ENCODE measurements at regions of chr22 and their contacts with region 1.

Region 1: DNA sequence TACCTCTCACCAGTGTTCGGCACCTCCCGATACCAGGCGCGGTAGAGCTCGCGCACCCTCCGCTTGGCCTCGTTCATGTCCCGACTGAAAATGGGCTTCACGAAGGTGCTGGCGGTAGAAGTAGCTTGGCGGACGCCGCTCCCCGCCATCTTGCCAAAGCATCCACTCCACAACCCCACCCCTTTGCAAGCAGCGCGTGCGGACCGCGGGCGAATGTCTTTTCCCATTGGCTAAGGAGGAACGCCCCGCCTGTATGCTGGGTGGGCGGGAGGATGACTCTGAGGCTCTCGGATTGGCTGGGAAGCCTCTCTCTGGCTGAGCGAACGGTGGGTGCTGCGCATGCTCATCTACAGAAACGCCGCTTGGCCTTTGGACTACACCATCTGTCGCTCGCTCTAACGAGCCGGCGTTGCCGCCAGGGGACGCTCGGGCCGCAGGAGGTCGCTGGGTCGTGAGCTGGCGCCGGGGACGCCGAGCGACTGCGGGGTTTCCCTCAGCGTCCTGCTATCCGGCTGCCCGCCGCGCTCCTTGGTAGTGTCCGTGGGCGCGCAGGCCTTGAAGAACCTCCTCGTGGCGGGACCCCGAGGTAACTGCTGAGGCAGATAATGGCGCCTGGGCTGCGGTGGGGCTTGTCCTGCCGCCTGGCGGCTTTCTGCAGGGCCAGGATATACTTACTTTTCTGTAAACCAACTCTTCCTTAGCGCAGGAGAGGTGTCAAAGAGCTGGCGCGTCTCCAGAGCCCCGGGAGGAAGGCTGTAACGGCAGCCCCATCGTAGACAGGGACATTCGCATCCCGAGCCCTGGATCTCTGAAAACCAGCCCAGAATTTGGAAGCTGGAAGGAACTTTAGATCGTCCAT is at the start of gene NDUFA6:
- DNase-seq: peak; percentile 97
- H3K4me3 ChIP-seq: peak within 1 kb of the TSS; percentile 93
- H3K27ac ChIP-seq: peak within 1 kb of the TSS; percentile 90
- H3K27me3 ChIP-seq: no peaks in the 10 kb centered on the region
- CTCF ChIP-seq: peak; percentile 86
- polyA plus RNA-seq, gene NDUFA6: 90.4 and 103 TPM in 2 replicates

Region 2: DNA sequence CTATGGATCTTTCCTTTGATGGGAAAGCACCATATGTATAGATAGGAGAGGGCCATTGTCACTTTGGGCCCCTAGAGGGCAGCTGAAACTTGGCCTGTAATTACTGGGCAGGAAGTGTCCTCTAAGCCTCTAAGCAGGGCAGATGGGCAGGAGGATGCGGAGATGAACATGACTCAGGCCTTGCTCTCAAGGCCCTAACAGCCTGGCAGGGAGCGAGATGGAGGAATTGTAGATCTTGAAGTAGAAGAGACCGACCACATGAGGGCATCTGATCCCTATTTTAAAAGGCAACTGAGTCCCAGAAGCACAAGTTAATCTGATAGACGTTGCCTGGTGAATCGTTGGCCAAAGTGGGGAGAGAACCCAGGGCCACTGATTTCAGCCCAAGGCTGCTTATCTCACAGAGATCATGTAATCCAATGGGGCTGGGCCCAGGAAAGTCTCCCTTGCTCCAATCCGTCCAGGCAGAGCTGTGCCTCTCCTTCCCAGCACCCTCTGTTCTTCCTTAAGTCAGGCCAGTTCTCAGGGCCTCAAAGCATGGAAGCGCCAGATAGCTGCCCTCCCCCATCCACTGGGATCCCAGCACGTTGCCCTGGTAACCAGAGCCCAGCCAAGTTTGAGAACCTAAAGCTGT is 124.1 kb before region 1 on chr22:
- CTCF ChIA-PET with region 1: interaction called, 12 read pairs
- POLR2A ChIA-PET with region 1: no interaction called
- DNase-seq: peak; percentile 61
- H3K4me3 ChIP-seq: no peak overlapping the region
- H3K27ac ChIP-seq: no peak overlapping the region
- H3K27me3 ChIP-seq: peaks cover 11% of the 10 kb centered on the region
- CTCF ChIP-seq: peak; percentile 43

Region 3: GRCh38 chr22:42079319-42080251 is 11.2 kb before region 1 on chr22 and contains the start of gene SMDT1:
- CTCF ChIA-PET with region 1: interaction called, 8 read pairs
- POLR2A ChIA-PET with region 1: interaction called, 18 read pairs
- DNase-seq: peak; percentile 96
- H3K4me3 ChIP-seq: peak within 1 kb of the TSS; percentile 93
- H3K27ac ChIP-seq: peak within 1 kb of the TSS; percentile 93
- H3K27me3 ChIP-seq: no peaks in the 10 kb centered on the region
- CTCF ChIP-seq: no peak
- polyA plus RNA-seq, gene SMDT1: 25.6 and 28.9 TPM in 2 replicates

Region 4: DNA sequence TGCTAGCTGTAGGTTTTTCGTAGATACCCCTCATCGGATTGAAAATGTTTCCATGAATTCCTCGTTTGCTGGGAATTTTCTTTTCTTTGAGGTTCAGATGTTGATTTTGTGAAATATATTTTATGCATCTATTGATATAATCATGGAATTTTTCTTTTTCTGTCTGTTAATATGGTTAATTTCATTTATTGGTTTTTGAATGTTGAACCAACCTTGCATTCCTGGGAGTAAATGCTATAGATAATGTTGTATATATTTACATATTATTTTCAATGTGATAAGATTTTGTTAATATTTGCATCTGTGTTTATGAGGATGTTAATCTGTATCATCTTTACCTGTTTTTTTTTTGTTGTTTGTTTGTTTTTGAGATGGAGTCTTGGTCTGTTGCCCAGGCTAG is 10.4 kb after region 1 on chr22:
- CTCF ChIA-PET with region 1: interaction called, 12 read pairs
- POLR2A ChIA-PET with region 1: no interaction called
- DNase-seq: no peak
- H3K4me3 ChIP-seq: no peak overlapping the region
- H3K27ac ChIP-seq: no peak overlapping the region
- H3K27me3 ChIP-seq: no peaks in the 10 kb centered on the region
- CTCF ChIP-seq: no peak

Region 5: GRCh38 chr22:42151924-42152635 is 61.3 kb after region 1 on chr22:
- CTCF ChIA-PET with region 1: no interaction called
- POLR2A ChIA-PET with region 1: no interaction called
- DNase-seq: no peak
- H3K4me3 ChIP-seq: no peak overlapping the region
- H3K27ac ChIP-seq: no peak overlapping the region
- H3K27me3 ChIP-seq: no peaks in the 10 kb centered on the region
- CTCF ChIP-seq: no peak

Region 6: DNA sequence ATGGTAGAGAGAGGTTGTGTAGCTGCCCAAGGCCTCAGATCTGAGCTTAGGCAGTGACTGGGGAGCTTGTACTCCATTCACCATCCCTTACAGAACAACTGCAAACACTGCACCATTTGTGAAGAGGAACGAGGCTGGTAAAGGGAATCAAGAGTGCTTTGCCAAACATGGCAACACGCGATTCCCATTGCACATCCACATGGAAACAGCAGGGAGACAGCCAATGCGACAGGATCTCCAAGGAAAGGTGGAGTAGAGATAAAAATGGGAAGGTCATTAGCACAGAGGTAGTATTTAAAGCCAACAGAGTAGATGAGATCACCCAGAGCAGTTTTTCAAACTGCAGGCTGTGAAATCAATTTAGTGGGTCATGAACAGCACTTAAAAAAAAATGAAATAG is 137.7 kb after region 1 on chr22:
- CTCF ChIA-PET with region 1: no interaction called
- POLR2A ChIA-PET with region 1: no interaction called
- DNase-seq: no peak
- H3K4me3 ChIP-seq: no peak overlapping the region
- H3K27ac ChIP-seq: no peak overlapping the region
- H3K27me3 ChIP-seq: no peaks in the 10 kb centered on the region
- CTCF ChIP-seq: no peak

Region 7: DNA sequence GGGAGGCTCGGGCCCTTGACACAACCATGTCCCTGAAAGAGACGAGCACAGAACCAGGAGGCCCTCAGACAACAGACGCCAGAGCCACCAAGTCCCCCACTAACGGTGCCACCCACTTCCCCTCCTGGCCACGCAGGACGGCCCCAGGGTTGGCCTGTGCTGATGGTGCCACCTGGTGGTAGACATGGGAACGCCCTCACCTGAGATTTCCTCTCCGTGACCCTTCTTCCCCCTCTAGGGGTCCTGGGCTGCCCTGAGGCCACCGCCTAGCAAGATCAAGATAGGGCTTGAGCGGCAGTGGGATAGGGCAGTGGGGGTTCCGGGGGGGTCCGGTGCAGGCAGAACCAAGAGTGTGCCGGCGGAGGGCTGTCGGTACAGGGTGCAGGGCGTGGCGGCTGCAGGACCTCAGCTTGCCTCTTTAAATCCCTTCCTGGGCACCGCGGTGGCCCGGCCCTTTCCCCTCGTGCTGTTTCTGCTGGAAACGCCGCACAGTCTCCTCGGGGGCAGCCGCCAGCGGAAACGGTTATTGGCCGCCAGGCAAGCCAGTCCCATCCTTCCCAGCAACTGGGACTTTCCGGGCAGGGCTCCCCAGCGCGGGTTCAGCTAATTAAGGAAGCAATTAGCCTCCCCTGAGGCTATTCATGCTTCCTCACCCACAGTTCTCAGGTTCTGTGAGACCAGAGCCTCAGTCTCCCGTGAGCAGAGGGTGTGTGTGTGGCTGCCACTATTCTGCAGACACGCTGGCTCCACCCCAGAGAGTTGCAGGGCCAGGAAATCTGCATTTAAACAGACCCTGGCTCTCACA is 346.9 kb after region 1 on chr22:
- CTCF ChIA-PET with region 1: interaction called, 56 read pairs
- POLR2A ChIA-PET with region 1: interaction called, 3 read pairs
- DNase-seq: no peak
- H3K4me3 ChIP-seq: peak overlapping the region; percentile 57
- H3K27ac ChIP-seq: no peak overlapping the region
- H3K27me3 ChIP-seq: peaks cover 35% of the 10 kb centered on the region
- CTCF ChIP-seq: peak; percentile 97

Region 8: GRCh38 chr22:42444077-42444904 is 353.5 kb after region 1 on chr22:
- CTCF ChIA-PET with region 1: interaction called, 56 read pairs
- POLR2A ChIA-PET with region 1: interaction called, 10 read pairs
- DNase-seq: peak; percentile 74
- H3K4me3 ChIP-seq: peak overlapping the region; percentile 53
- H3K27ac ChIP-seq: peak overlapping the region; percentile 57
- H3K27me3 ChIP-seq: peaks cover 5% of the 10 kb centered on the region
- CTCF ChIP-seq: peak; percentile 82

Region 9: DNA sequence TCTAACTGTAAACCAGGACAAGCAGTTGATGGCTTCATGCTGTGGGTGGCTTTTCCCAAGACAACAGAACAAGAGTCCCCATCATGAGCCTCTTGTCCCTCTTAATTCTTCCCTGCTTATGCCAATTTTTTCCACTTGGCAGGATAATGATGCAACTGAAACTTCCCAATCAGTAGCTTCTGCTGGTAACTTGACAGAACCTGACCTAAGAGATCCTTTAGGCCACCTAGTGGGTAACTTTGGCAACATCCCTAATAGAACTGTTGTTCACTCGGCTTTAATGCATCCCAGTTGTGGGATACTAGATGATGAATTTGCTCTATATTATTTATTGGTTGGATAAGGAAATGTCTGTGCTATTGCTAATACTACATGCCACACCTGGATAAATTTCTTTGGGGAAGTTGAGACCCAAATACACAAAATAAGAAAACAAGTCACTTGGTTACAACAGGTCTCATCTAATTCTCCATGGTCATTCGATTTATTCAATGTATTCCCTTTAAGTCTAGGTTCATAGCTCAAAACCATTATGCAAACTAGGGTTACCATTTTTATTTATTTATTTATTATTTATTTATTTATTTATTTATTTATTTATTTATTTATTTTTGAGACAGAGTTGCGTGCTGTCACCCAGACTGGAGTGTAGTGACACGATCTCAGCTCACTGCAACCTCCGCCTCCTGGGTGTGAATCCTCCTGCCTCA is 382.8 kb after region 1 on chr22:
- CTCF ChIA-PET with region 1: interaction called, 20 read pairs
- POLR2A ChIA-PET with region 1: no interaction called
- DNase-seq: peak; percentile 11
- H3K4me3 ChIP-seq: no peak overlapping the region
- H3K27ac ChIP-seq: no peak overlapping the region
- H3K27me3 ChIP-seq: peaks cover 13% of the 10 kb centered on the region
- CTCF ChIP-seq: peak; percentile 78

Measured in AG04450 (cell line).